GM18951 (cell line): ENCODE measurements at regions of chr10 and their contacts with region 1.

Region 1: DNA sequence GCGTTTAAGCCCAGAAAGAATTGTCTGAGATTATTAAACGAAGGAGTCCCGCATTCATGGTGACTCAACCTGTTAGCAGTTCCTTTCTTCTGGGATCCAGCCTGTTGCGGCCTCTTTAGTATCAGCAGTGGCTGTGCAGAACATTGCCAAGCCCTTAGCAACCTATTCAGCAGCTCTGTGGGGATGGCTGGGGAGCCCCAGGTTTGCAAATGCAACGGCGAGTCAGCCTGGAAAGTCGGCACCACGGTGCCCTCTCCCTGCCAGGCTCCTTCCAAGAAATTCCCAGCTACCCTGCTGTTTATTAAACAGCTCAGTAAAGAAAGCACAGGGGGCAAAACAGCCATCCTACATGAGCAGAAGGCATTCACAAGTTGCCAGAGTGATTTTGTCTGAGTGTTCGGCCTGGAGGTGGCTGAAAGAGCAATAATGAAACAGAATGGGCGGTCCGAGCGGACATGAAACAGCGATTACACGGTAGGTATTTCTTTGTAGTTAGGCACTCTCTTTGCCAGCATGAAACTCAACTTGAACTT is 198.3 kb downstream of the BAMBI start:
- POLR2A ChIP-seq: no peak

Region 2: DNA sequence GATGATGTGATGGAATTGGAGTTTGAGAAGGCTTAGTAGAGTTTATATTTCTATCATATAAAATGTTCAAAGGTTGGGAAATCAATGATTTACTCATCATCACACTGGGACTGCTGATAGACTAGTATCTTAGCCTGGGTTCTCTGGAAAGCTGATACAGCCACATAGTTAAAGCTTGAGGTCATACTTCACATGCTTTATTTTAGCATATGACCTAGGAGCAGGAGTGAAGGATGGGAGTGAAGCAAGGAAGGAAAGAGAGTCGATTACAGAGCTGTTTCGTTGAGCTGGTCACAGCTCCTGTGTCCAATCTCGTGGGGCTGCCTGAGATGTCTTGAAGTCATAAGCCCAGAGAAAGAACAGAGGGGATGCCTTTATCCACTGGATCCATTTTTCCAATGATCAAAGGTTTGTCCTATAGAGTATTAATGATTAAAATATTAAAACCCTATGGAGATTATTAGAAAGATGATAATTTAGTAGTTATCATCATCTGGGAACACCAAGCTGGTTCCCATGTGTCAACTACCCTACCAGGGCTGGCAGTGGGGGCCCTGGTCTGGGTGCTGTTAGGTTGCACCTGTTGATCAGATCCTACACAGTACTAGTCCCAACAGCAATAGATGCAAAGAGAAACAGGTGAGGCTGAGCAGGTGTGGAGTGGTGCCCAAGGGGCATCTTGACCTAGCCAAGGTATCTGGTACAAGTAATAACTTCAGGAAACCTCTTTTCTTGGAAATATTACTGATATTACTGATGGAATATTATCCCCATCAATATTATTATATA is 120.5 kb before region 1 on chr10:
- in situ Hi-C with region 1: no loop called
- POLR2A ChIP-seq: no peak

Region 3: DNA sequence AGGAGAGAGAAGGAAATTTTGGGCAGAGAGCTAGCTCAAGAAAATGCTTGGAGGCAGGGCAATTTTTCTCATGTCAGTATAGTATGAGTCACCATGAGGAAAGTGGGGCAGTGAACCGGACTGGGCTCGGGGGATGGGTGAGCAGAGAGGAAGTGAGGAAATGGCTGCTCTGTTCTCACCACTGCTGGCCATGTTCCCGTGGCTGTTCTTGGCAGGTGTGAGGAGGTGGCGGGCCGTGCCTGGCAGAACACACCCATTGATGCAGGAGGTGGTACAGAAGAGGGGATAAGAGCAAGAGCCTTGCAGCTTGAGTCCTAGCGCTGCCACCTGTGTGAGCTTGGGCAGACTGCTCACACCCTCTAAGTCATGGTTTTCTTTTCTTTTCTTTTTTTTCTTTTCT is 108.8 kb after region 1 on chr10:
- in situ Hi-C with region 1: loop called (anchors 10 kb)
- POLR2A ChIP-seq: no peak